ENCODE measurements at regions of chr3 and their contacts with region 1.

Region 1: DNA sequence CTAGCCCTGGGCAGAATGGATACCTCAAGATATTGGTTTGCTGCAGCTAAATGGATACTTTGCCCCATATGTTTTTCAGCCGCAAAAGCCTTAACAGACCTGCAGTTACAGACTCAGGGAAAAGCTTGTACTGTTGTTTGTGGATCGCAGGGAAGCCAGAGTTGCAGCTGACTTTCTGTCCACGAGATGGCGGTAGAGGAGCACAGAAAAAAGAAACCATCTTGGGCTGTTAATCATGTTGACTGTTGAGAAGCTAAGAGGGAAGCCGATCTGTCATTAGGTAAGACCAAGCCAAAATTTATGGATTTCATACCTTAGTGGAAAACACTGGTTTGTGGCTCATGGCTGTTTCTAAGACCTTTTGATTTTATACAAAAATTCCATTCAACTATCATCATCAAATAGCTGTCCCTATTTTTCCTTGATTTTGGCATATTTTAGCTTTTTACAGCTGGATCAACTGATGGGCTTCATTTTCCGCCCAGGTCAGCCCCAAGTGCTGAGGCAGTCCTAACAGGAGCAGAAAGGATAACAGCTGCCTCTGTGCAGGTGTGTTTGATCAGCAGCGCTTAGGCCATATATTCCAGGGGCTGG is 205.7 kb upstream of the ZPLD1 start:
- DNase-seq: peak; percentile 84
- H3K4me3 Mint-ChIP-seq: no peak overlapping the region
- H3K27ac Mint-ChIP-seq: no peak overlapping the region
- H3K4me1 Mint-ChIP-seq: peaks cover 5% of the 10 kb centered on the region
- H3K27me3 Mint-ChIP-seq: no peaks in the 10 kb centered on the region
- CTCF ChIP-seq: peak; percentile 92

Region 2: GRCh38 chr3:101695779-101696372 is 533.3 kb before region 1 on chr3:
- CTCF ChIA-PET with region 1: interaction called, 5 read pairs
- POLR2A ChIA-PET with region 1: no interaction called
- intact Hi-C with region 1: loop called (anchors 2 kb)
- DNase-seq: peak; percentile 75
- H3K4me3 Mint-ChIP-seq: no peak overlapping the region
- H3K27ac Mint-ChIP-seq: no peak overlapping the region
- H3K4me1 Mint-ChIP-seq: peaks cover 7% of the 10 kb centered on the region
- H3K27me3 Mint-ChIP-seq: no peaks in the 10 kb centered on the region
- CTCF ChIP-seq: peak; percentile 83

Region 3: GRCh38 chr3:101827211-101828174 is 401.7 kb before region 1 on chr3:
- CTCF ChIA-PET with region 1: interaction called, 40 read pairs
- POLR2A ChIA-PET with region 1: interaction called, 4 read pairs
- intact Hi-C with region 1: no loop called
- DNase-seq: peak; percentile 81
- H3K4me3 Mint-ChIP-seq: peak overlapping the region; percentile 88
- H3K27ac Mint-ChIP-seq: peak overlapping the region; percentile 87
- H3K4me1 Mint-ChIP-seq: peaks cover 25% of the 10 kb centered on the region
- H3K27me3 Mint-ChIP-seq: no peaks in the 10 kb centered on the region
- CTCF ChIP-seq: no peak

Region 4: DNA sequence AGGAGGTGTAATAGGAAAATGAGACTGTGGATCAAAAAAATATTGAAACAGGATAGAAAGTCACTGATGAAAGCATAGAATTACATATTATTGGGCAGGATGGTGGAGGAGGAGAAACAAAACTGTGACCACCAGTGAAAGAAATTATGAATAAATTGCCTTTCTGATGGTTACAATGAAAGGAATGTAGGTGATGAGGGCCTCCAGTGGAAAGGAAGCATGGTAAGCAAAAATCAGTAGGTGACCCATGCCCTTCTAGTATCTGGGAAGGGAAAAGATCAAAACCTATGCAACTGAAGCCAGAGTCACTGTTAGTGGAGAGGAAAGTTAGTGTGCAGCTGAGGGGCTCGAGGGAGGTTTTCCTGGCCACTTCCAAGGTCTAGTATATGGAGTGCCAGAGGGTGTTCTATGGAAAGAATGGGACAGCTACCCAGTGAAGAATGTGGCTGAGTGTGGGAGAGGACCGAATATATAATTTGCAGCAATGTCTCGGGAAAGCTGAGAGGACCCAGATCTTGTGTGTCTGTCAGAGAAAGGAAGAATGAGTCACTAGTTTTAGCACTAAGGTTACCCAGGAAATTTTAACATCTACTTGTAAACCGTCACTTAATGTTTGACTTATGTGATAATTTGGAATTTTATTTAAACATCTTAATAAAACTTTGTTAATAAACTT is 233.7 kb before region 1 on chr3:
- CTCF ChIA-PET with region 1: interaction called, 20 read pairs
- POLR2A ChIA-PET with region 1: no interaction called
- intact Hi-C with region 1: loop called (anchors 10 kb)
- DNase-seq: peak; percentile 24
- H3K4me3 Mint-ChIP-seq: no peak overlapping the region
- H3K27ac Mint-ChIP-seq: peak overlapping the region; percentile 55
- H3K4me1 Mint-ChIP-seq: peaks cover 25% of the 10 kb centered on the region
- H3K27me3 Mint-ChIP-seq: no peaks in the 10 kb centered on the region
- CTCF ChIP-seq: no peak

Region 5: DNA sequence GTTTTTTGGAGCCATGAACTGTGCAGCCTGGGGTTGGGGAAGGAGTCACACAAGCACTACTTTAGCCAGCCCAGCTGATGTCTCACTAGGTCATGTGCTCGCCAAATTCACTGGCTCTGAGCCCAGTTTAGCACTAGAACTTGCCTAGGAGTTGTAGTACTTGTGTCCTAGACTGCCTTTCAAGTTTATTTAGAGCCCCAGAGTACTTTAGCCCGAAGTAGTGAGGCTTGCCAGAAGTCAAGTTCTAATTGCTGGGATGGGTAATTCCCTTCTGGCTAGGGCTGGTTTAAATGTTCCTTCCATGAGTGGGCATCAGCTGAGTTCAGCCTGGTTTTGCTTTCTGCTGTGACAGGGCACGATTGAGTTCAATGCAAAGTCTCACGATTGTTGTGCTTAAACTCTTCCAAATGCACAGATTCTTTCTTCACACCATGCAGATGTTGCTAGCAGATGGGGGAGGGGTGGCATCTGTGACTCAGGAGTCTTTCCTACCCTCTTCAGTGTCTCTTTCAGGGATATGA is 22.6 kb before region 1 on chr3:
- CTCF ChIA-PET with region 1: interaction called, 12 read pairs
- POLR2A ChIA-PET with region 1: no interaction called
- intact Hi-C with region 1: no loop called
- DNase-seq: peak; percentile 56
- H3K4me3 Mint-ChIP-seq: peak overlapping the region; percentile 22
- H3K27ac Mint-ChIP-seq: peak overlapping the region; percentile 81
- H3K4me1 Mint-ChIP-seq: peaks cover 11% of the 10 kb centered on the region
- H3K27me3 Mint-ChIP-seq: no peaks in the 10 kb centered on the region
- CTCF ChIP-seq: no peak

Region 6: DNA sequence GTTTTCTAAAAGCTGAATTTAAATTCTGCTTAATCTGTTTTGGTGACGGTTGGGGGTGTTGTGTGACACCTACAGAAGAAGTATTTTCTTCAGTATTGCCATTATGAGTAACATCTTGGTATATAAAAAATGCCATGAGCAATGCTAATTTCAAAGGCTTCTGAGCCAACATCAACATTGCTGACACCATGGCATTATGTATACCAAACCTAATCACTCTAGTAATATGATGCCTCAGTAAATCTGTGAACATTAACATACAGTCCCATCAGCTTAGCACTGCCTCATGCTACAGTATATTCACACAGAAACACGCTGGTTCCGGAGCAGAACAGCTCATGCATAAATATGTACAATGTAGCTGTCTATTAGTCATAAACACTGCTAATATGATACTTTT is 281.5 kb after region 1 on chr3:
- CTCF ChIA-PET with region 1: interaction called, 10 read pairs
- POLR2A ChIA-PET with region 1: no interaction called
- intact Hi-C with region 1: no loop called
- DNase-seq: peak; percentile 80
- H3K4me3 Mint-ChIP-seq: no peak overlapping the region
- H3K27ac Mint-ChIP-seq: no peak overlapping the region
- H3K4me1 Mint-ChIP-seq: no peaks in the 10 kb centered on the region
- H3K27me3 Mint-ChIP-seq: no peaks in the 10 kb centered on the region
- CTCF ChIP-seq: no peak

Region 7: DNA sequence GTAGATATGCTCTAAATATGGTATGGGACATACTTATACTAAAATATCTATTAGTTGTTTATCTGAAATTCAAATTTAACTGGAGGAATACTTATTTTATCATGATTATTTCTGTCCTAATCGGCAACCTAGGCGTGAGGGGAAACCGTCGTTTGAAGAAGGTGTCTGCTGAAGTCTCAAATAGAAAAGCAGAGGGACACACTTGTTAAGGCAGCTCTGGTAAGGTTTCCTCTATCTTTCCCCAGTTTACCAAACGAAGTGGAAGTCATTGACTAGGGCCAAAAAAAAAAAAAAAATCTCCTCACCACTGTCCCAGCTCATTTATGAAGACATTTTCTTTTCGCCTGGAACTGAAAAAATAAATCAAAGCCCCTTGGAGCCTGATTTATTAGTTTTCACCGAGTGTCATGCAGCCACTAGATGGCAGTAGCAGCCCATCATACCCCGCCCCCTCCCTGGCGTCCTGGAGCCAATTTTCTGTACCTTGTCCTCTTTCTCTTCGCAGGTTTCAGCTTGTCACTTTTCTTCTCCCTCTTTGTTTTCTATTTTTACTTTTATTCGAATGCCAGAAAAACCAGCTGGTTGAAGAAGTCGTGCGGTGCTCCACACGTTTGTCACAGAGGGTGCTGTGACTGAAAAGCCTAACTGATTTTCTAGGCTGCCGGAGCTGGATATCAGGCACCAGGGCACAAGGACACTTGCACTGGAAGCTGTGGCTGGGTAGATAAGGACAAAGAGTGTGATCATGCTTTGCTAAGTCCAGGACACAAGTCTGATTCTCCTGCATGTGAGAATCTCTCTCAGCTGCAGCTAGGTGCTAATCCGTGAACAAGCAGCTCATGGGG is 444.3 kb after region 1 on chr3:
- CTCF ChIA-PET with region 1: interaction called, 17 read pairs
- POLR2A ChIA-PET with region 1: no interaction called
- intact Hi-C with region 1: loop called (anchors 1 kb)
- DNase-seq: peak; percentile 61
- H3K4me3 Mint-ChIP-seq: peak overlapping the region; percentile 9
- H3K27ac Mint-ChIP-seq: no peak overlapping the region
- H3K4me1 Mint-ChIP-seq: no peaks in the 10 kb centered on the region
- H3K27me3 Mint-ChIP-seq: peaks cover 93% of the 10 kb centered on the region
- CTCF ChIP-seq: peak; percentile 87

Measured in MCF 10A (cell line).